Cardiac septum (tissue), 1 donor: ENCODE measurements at regions of chr10 and their contacts with region 1.

Region 1: GRCh38 chr10:95508730-95509129 is 52.4 kb downstream of the SORBS1 start:
- DNase-seq: no peak

Region 2: DNA sequence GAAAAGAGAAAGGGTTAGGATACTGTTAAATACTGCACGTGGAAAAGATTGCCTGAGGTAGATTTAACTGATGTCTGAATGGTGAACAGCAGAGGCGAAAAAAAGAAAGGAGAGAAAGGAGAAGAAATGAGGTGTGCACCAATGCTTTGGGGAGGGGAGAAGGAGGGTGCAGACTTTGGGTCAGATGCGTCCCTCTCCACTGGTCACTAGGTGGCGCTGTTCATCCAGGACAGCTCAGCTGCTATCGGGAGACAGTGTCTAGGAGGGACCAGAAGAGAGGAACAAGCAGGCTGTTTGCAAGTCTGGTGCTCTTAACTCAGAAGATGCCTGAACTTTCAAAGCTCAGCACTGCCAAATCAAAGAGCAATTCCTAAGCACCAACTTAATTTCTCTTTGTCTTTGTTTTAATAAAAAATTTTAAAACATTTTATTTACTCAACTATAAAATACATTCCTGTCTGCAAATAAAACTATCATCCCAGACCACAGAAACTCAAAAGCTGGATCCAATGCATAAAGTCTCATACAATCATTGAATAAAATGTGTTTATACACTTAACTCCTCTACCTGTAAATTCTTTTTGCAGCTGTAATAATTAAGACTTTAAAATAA is 134.0 kb before region 1 on chr10:
- intact Hi-C with region 1: no loop called
- DNase-seq: no peak

Region 3: GRCh38 chr10:95400787-95401186 is 107.9 kb before region 1 on chr10:
- intact Hi-C with region 1: no loop called
- DNase-seq: no peak

Region 4: DNA sequence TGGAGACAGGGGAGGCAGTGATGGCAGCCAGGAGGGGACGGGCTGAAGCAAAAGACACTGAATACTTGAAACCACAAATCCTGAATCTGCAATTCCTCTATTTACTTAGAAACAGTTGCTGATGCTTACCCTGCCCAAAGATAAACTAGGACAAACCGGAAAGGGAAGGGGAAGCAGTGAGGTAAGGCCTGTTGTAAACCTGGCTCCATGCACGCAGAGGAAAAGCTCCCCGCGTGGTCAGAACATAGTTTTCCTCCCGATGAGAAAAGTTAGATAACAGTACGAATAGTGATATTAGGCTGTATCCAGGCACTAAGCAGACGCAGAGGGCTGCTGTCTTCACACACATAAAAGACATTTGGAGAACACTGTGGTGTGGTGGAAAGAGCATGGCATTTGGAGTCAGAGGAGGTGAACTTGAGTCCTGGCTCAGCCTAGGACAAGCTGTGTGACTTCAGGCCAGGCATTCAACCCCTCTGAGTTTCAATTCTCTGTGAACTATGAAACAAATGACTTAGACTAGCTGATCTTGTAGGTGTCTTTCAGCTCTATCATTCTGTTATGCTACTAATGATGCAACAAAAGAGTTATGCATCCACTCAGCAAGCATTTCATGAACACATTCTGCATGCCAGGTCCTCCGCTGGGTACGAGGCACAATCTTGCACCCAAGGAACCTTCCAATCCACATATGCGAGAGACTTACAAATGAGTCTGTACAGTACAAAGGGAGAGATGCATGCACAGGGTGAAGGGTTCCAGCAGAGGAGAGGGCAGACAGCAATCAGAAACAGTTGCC is 28.4 kb before region 1 on chr10:
- intact Hi-C with region 1: loop called (anchors 2 kb)
- DNase-seq: no peak

Region 5: DNA sequence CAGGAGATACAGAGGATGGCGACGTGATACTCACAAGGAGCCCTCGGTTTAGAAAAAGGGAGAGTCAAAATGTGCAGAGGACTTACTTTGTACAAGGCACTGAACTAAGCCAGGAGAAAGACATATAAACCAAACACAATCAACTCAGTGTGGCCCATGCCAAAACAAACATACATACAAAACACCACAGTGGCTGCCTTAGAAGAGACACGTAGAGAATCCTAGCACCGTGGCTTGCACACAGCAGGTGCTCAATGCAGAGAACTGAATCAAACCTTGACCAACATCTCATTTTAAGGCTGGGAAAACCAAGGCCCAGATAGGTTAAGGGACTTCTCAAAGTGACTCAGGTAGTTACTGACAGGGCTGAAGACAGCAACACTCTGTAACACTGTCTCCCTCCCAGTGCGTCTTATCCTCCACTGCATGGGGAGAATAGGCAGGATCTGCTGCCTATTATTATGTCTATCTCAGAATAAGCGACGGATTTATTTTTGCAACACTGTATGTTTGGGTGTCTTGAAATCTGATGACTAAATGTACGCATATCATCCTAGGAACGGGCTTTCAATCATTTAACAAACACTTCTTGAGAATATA is 41.4 kb after region 1 on chr10:
- intact Hi-C with region 1: no loop called
- DNase-seq: no peak